ENCODE measurements at regions of chr14 and their contacts with region 1.

Region 1: GRCh38 chr14:99971087-99971940 is 93.9 kb upstream of the EVL start:
- DNase-seq: peak; percentile 70 to 92 (median 76)
- ATAC-seq: peak; percentile 88
- H3K4me3 ChIP-seq: peak overlapping the region; percentile 24
- H3K4me3 Mint-ChIP-seq: peak overlapping the region; percentile 86
- H3K27ac ChIP-seq: no peak overlapping the region
- H3K27ac Mint-ChIP-seq: no peak overlapping the region
- H3K4me1 ChIP-seq: peaks cover 12% of the 10 kb centered on the region
- H3K4me1 Mint-ChIP-seq: peaks cover 26% of the 10 kb centered on the region
- H3K27me3 ChIP-seq: peaks cover 0 to 3% of the 10 kb centered on the region in 2 experiments
- H3K27me3 Mint-ChIP-seq: peaks cover 21% of the 10 kb centered on the region
- CTCF ChIP-seq: no peak

Region 2: DNA sequence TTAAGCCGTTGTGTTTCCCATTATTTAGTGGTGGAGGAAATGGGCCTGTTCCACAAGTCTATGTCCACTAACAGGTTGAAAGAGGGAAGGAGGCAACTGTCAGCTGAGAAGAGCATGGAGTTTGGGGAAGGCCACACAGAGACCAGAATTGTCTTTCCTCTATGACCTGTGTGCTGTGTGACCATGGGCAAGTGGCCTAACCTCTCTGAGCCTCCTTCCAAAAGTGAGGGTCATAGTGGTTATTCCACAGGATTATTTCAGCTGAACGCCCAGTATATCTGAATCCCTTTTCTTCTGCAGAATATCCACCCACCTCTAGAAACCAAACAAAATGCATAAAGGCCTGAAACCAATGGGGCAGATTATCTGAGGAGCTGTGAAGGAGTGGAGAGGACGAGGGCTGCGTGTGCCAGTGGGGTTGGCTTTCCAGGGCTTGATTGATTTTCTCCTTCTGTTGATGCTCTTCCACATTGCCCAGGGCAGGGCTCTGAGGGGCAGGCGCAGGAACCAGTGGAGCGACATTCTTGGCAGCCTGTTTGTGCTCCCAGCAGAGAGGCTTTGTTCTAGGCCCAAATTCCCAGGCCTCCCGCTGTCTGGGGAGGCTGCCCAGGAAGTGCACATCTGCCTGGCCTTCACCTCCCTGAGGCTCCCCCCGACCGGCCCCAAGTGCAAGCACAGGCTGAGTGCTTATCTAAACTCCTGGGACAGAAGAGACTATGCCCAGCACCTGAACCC is 1152.0 kb before region 1 on chr14:
- CTCF ChIA-PET with region 1: no interaction called
- POLR2A ChIA-PET with region 1: no interaction called
- intact Hi-C with region 1: no loop called
- DNase-seq: no peak
- ATAC-seq: no peak
- H3K4me3 ChIP-seq: no peak overlapping the region
- H3K4me3 Mint-ChIP-seq: no peak overlapping the region
- H3K27ac ChIP-seq: no peak overlapping the region
- H3K27ac Mint-ChIP-seq: no peak overlapping the region
- H3K4me1 ChIP-seq: peaks cover 3% of the 10 kb centered on the region
- H3K4me1 Mint-ChIP-seq: peaks cover 10% of the 10 kb centered on the region
- H3K27me3 ChIP-seq: no peaks in the 10 kb centered on the region
- H3K27me3 Mint-ChIP-seq: no peaks in the 10 kb centered on the region
- CTCF ChIP-seq: no peak

Region 3: GRCh38 chr14:100221533-100222223 is 250.4 kb after region 1 on chr14:
- CTCF ChIA-PET with region 1: no interaction called
- POLR2A ChIA-PET with region 1: interaction called, 10 read pairs
- intact Hi-C with region 1: no loop called
- DNase-seq: peak; percentile 52 to 87 (median 68)
- ATAC-seq: peak; percentile 94
- H3K4me3 ChIP-seq: peak overlapping the region; percentile 73
- H3K4me3 Mint-ChIP-seq: no peak overlapping the region
- H3K27ac ChIP-seq: peak overlapping the region; percentile 63 to 64
- H3K27ac Mint-ChIP-seq: no peak overlapping the region
- H3K4me1 ChIP-seq: peaks cover 59% of the 10 kb centered on the region
- H3K4me1 Mint-ChIP-seq: peaks cover 6% of the 10 kb centered on the region
- H3K27me3 ChIP-seq: no peaks in the 10 kb centered on the region
- H3K27me3 Mint-ChIP-seq: no peaks in the 10 kb centered on the region
- CTCF ChIP-seq: no peak

Region 4: GRCh38 chr14:100285021-100285912 is 314.0 kb after region 1 on chr14:
- CTCF ChIA-PET with region 1: no interaction called
- POLR2A ChIA-PET with region 1: no interaction called
- intact Hi-C with region 1: loop called in 1 of 2 experiments (anchors 5 kb)
- DNase-seq: peak; percentile 60 to 91 (median 76)
- ATAC-seq: peak; percentile 92
- H3K4me3 ChIP-seq: peak overlapping the region; percentile 59
- H3K4me3 Mint-ChIP-seq: peak overlapping the region; percentile 80
- H3K27ac ChIP-seq: peak overlapping the region in 1 of 2 donors; percentile 79
- H3K27ac Mint-ChIP-seq: peak overlapping the region; percentile 42
- H3K4me1 ChIP-seq: peaks cover 15% of the 10 kb centered on the region
- H3K4me1 Mint-ChIP-seq: no peaks in the 10 kb centered on the region
- H3K27me3 ChIP-seq: no peaks in the 10 kb centered on the region
- H3K27me3 Mint-ChIP-seq: no peaks in the 10 kb centered on the region
- CTCF ChIP-seq: peak; percentile 96

Region 5: DNA sequence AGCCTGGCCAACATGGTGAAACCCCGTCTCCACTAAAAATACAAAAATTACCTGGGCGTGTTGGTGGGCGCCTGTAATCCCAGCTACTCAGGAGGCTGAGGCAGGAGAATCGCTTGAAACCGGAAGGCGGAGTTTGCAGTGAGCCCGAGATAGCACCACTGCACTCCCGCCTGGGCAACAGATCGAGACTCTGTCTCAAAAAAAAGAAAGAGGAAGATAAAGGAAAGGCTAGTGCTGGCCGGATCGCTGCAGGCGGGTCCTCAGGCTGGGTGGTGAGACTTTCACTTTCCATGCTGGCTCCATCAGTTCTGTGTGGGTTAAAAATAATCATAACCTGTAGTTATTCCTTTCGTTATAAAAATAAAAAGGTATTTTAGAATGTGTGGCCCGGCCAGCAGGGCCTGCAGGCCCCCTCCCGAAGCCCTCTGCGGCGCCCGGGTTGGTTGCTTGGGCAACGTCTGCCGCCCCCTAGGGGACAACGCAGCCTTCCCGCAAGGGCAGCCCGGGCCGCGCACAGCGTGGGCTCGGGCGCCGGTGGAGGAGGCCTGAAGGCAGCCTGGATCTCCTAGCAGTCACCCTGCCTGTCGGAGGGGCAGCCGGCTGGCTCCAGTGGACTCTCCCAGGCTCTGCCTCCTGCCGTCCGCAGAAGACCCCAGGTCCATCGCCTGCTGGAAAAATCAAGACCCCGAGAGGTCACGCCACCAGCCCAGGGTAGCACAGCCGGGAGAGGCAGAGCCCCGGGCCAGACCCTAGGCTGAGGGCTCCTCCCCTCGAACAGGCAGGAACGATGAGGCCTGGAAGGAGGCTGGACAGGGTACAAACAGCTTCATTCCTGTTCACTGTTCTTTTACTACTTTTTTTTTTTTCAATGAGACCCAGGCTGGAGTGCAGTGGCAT is 346.8 kb after region 1 on chr14:
- CTCF ChIA-PET with region 1: no interaction called
- POLR2A ChIA-PET with region 1: no interaction called
- intact Hi-C with region 1: no loop called
- DNase-seq: peak; percentile 49 to 84 (median 66)
- ATAC-seq: peak; percentile 98
- H3K4me3 ChIP-seq: peak overlapping the region; percentile 52
- H3K4me3 Mint-ChIP-seq: peak overlapping the region; percentile 79
- H3K27ac ChIP-seq: no peak overlapping the region
- H3K27ac Mint-ChIP-seq: no peak overlapping the region
- H3K4me1 ChIP-seq: peaks cover 12% of the 10 kb centered on the region
- H3K4me1 Mint-ChIP-seq: peaks cover 4% of the 10 kb centered on the region
- H3K27me3 ChIP-seq: no peaks in the 10 kb centered on the region
- H3K27me3 Mint-ChIP-seq: no peaks in the 10 kb centered on the region
- CTCF ChIP-seq: peak; percentile 86